ENCODE measurements at regions of chr10 and their contacts with region 1.

Region 1: GRCh38 chr10:75508239-75508813 is 76.9 kb downstream of the LRMDA start:
- DNase-seq: peak; percentile 67
- H3K4me3 ChIP-seq: peak overlapping the region in 1 of 2 experiments; percentile 11; a peak in 1 of 4 replicates
- H3K27ac ChIP-seq: peak overlapping the region; percentile 77 to 98
- H3K4me1 ChIP-seq: peaks cover 7 to 29% of the 10 kb centered on the region in 2 experiments; a peak in 2 of 4 replicates
- H3K27me3 ChIP-seq: no peaks in the 10 kb centered on the region
- CTCF ChIP-seq: no peak
- EP300 ChIP-seq: peak; percentile 98 to 100
- RAD21 ChIP-seq: peak; percentile 29; the same call in 1 of the 2 replicates

Region 2: GRCh38 chr10:75477680-75478079 is 30.6 kb before region 1 on chr10:
- CTCF ChIA-PET with region 1: interaction called, 4 read pairs
- POLR2A ChIA-PET with region 1: interaction called, 10 read pairs
- DNase-seq: peak; percentile 76
- H3K4me3 ChIP-seq: no peak overlapping the region
- H3K27ac ChIP-seq: peak overlapping the region in 1 of 2 experiments; percentile 89; a peak in 2 of 4 replicates
- H3K4me1 ChIP-seq: peaks cover 0 to 16% of the 10 kb centered on the region in 2 experiments; a peak in 2 of 4 replicates
- H3K27me3 ChIP-seq: no peaks in the 10 kb centered on the region
- CTCF ChIP-seq: no peak
- EP300 ChIP-seq: peak in 1 of 2 experiments; percentile 99; a peak in 2 of 4 replicates
- RAD21 ChIP-seq: peak; percentile 19; the same call in 1 of the 2 replicates

Region 3: GRCh38 chr10:75841266-75841665 is 332.9 kb after region 1 on chr10:
- CTCF ChIA-PET with region 1: no interaction called
- POLR2A ChIA-PET with region 1: no interaction called
- DNase-seq: no peak
- H3K4me3 ChIP-seq: no peak overlapping the region
- H3K27ac ChIP-seq: no peak overlapping the region
- H3K4me1 ChIP-seq: peaks cover 0 to 4% of the 10 kb centered on the region in 2 experiments; a peak in 2 of 4 replicates
- H3K27me3 ChIP-seq: no peaks in the 10 kb centered on the region
- CTCF ChIP-seq: no peak
- EP300 ChIP-seq: no peak
- RAD21 ChIP-seq: no peak

Region 4: DNA sequence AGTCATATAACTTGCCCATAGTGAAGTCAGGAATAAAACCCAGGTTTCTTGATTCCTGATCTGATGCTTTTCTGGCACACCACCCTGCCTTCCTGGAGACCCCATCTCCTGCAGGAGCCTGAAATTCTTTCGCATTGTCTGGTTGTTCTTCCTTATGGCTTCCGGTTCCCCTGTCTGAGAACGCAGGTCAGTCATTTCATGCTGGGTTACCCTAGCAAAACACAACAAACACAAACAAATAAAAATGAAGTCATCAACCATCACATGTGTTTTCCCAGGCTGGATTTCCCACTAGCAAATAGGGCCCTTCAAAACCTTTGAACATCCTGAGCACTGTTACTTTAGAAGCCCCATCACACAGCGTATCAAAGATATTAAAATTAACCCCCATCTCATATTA is 492.7 kb after region 1 on chr10:
- CTCF ChIA-PET with region 1: no interaction called
- POLR2A ChIA-PET with region 1: no interaction called
- DNase-seq: no peak
- H3K4me3 ChIP-seq: no peak overlapping the region
- H3K27ac ChIP-seq: no peak overlapping the region
- H3K4me1 ChIP-seq: no peaks in the 10 kb centered on the region
- H3K27me3 ChIP-seq: peaks cover 12% of the 10 kb centered on the region; the same call in 1 of the 2 replicates
- CTCF ChIP-seq: no peak
- EP300 ChIP-seq: no peak
- RAD21 ChIP-seq: no peak